ENCODE measurements at regions of chr11 and their contacts with region 1.

Region 1: DNA sequence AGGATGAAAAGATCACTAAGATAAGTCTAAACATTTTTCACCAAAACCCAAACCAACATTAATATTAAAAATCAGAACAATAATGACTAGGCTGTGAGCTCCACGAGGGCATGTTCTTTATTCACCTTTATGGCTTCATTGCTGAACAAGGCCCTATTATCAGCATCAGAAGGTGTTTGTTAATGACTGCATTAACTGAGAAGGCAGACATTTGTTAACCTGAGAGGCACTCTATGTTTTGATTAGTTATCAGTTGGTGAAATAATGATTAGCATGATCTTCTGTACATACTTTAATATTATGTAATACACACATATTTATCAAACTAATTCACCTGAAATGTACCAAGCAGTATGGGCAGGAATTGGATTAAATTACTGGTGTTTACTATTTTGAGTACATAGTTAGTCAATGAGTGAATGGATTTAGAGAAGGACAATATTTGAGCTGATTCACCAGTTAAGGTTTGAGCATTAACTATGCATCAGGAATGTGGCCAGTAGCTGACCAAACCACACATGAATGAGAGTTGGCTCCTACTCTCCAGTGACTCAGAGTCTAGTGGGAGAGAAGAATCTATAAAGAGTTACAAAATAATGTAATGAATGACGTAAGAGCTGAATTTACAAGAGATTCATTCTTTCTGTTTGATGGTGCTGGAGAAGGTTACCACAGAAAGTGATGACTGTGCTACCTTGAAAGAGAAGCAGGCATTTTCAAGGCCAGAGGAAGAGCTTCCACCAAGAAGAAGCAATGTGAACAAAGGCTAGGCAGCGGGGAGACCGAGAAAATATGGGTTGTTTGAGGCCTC is 6.7 kb downstream of the IL18 start:
- DNase-seq: peak; percentile 83 to 96 (median 95)
- H3K4me3 ChIP-seq: no peak overlapping the region
- H3K4me3 Mint-ChIP-seq: no peak overlapping the region
- H3K27ac ChIP-seq: peak overlapping the region; percentile 22 to 65
- H3K27ac Mint-ChIP-seq: peak overlapping the region; percentile 55 to 96 (median 88)
- H3K4me1 ChIP-seq: peaks cover 41 to 52% of the 10 kb centered on the region in 2 donors
- H3K4me1 Mint-ChIP-seq: peaks cover 48% of the 10 kb centered on the region
- H3K27me3 ChIP-seq: no peaks in the 10 kb centered on the region
- H3K27me3 Mint-ChIP-seq: peaks cover 0 to 1% (median 1%) of the 10 kb centered on the region in 3 donors
- CTCF ChIP-seq: no peak

Region 2: GRCh38 chr11:112121981-112122615 is 35.1 kb before region 1 on chr11:
- intact Hi-C with region 1: loop called (anchors 5 kb)
- DNase-seq: peak in 2 of 3 donors; percentile 16 to 71
- H3K4me3 ChIP-seq: no peak overlapping the region
- H3K4me3 Mint-ChIP-seq: no peak overlapping the region
- H3K27ac ChIP-seq: no peak overlapping the region
- H3K27ac Mint-ChIP-seq: peak overlapping the region in 4 of 7 donors; percentile 8 to 94 (median 65)
- H3K4me1 ChIP-seq: peaks cover 22 to 29% of the 10 kb centered on the region in 2 donors
- H3K4me1 Mint-ChIP-seq: peaks cover 28% of the 10 kb centered on the region
- H3K27me3 ChIP-seq: no peaks in the 10 kb centered on the region
- H3K27me3 Mint-ChIP-seq: no peaks in the 10 kb centered on the region
- CTCF ChIP-seq: no peak

Measured in CD14-positive monocyte (primary cell).